Heart right ventricle (tissue), 16 donors: ENCODE measurements at regions of chr5 and their contacts with region 1.

Region 1: GRCh38 chr5:141618804-141619554 is at the start of gene DIAPH1:
- DNase-seq: peak; percentile 96
- ATAC-seq: peak; percentile 95 to 97 (median 96)
- H3K4me3 ChIP-seq: peak within 1 kb of the TSS; percentile 62 to 99 (median 94)
- H3K27ac ChIP-seq: peak within 1 kb of the TSS; percentile 86 to 99 (median 96)
- H3K4me1 ChIP-seq: peaks cover 0 to 63% (median 31%) of the 10 kb centered on the region in 9 donors
- H3K27me3 ChIP-seq: no peaks in the 10 kb centered on the region
- CTCF ChIP-seq: peak; percentile 97 to 99 (median 99)
- total RNA-seq, gene DIAPH1: 27.3 to 93.2 (median 46.9) TPM

Region 2: DNA sequence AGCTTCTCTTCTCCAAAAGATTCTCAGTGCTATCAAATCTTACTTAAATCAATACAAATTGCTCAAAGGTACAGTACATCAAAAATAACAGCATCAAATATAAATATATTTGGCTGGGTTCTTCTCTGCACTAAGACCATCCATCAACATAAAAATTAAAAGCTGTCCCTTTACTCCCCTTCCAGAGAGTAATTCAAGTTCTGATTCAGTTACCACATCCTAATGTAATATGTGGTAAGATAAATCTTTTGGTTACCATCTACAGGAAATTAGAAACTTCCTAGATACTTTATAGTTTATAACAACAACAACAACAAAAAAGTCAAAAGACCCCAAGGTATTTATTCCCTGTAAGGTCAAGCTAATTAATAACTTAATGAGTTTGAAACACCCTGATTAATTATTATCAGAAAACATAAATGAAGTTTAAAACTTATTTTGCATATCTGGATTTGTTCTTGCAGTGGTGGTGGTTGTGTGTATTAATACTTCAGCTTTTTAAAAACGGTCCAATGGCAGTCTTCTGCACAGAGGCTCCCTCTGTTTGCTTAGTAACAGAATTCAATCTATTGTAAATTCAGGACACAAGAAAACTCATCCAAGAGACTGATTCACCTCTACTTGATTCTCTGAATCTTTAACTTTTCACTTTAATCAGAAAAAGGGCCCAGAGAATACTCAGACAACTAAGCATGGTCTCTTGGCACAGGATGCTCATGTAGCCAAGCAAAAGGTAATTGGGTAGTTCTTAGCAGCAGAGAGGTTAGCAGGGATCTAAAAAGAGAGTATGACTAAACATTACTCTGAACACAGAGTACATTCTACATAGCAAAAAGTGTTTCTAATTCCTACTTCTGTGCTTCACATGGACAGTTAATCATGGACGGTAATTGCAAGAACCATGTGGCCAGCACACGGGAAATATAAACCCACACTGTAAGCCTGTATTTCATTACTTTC is 20.3 kb before region 1 on chr5:
- intact Hi-C with region 1: loop called in 4 of 10 experiments (anchors 1 to 2 kb)
- DNase-seq: no peak
- ATAC-seq: peak; percentile 81 to 96 (median 88)
- H3K4me3 ChIP-seq: no peak overlapping the region
- H3K27ac ChIP-seq: peak overlapping the region; percentile 16 to 84 (median 77)
- H3K4me1 ChIP-seq: peaks cover 0 to 73% (median 34%) of the 10 kb centered on the region in 9 donors
- H3K27me3 ChIP-seq: no peaks in the 10 kb centered on the region
- CTCF ChIP-seq: no peak

Region 3: DNA sequence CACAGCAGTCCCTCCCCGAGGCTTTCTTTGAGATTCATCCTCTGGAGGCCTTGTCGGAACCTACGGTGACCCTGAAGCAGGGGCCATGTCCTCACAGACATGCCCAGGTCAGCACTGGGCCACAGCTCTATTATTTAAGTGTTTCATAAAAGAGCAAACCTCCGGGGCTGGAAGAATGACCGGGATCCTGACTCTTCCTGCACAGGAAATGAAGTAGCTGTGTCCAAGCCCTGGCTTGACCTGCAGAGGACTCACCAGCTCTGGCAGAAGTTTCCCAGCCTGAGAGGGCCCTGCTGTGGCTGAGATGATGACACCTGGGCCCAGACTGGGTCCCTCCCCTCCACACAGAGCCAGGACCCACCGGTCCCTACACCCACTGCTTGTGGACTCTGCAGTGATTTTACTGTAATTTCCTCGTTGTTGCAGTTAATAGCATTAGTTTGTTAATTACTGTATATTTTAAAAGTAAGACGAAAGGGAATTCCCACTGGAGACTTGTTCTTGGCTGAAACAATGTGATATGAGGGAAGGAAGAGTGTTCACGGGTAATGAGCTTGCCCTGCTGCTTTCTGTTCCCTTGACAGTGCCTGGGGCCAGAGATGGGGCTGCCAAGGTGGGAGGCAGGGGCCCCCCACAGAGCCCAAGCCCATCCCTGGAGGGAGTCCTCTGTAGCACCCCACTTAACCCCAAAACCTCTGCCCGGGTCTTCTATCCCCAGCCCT is 187.1 kb after region 1 on chr5:
- intact Hi-C with region 1: no loop called
- DNase-seq: peak; percentile 29 to 74
- ATAC-seq: peak; percentile 75 to 93 (median 91)
- H3K4me3 ChIP-seq: no peak overlapping the region
- H3K27ac ChIP-seq: peak overlapping the region; percentile 59 to 93 (median 81)
- H3K4me1 ChIP-seq: peaks cover 16 to 67% (median 48%) of the 10 kb centered on the region in 9 donors
- H3K27me3 ChIP-seq: peaks cover 0 to 56% (median 18%) of the 10 kb centered on the region in 7 donors
- CTCF ChIP-seq: peak in 1 of 9 donors; percentile 31

Region 4: DNA sequence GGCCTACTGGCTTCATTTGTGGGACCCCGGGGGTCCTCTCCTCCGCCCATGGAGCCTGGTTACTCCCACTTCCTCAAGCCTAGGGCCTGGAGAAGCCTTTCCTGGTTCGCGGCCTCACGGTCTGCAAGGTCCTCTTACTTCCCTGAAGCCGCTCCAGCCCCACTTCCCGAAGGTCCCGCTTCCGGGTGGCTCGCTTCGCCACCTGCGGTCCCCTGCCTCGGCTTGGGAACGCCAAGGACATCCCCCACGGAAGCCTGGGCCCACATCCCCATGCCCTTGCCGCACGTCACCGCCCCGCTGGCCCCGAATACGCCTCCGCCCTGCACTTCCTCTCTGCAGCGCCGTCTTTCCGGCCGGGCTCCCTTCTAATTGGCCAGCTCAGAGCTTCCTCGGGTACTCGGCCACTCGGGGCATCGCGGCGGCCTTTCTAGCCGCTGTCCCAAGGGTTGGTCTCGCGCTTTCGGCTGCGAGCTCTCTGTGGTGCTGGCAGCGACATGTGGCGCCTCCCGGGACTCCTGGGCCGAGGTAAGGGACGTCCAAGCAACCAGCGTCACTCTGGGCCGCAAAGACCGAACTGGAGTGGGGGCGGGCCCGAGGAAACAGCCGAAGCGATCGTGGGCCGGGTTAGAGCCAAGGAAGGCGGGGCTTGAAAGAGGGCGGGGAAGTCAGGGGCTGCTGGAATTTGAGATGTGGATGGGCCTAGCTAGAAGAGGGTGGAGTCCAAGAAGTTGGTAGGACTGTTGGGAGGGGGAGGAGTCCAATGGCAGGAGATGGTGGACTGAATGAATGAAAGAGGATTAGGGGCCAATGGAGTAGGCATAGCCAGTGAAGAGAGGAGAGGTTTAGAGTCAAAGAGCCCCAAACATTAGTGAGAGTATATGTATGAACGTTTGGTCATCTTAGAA is 304.7 kb after region 1 on chr5 and contains the start of gene DELE1:
- intact Hi-C with region 1: no loop called
- DNase-seq: peak; percentile 95 to 97
- ATAC-seq: peak; percentile 98 to 99 (median 98)
- H3K4me3 ChIP-seq: peak within 1 kb of the TSS; percentile 37 to 81 (median 66)
- H3K27ac ChIP-seq: peak within 1 kb of the TSS; percentile 84 to 99 (median 98)
- H3K4me1 ChIP-seq: peaks cover 4 to 55% (median 37%) of the 10 kb centered on the region in 9 donors
- H3K27me3 ChIP-seq: no peaks in the 10 kb centered on the region
- CTCF ChIP-seq: no peak
- total RNA-seq, gene DELE1: 82.1 to 192 (median 141) TPM